ENCODE measurements at regions of chr18 and their contacts with region 1.

Region 1: GRCh38 chr18:22378672-22379282 is 38.9 kb downstream of the CTAGE1 start:
- DNase-seq: peak; percentile 14 to 27
- ATAC-seq: peak in 7 of 8 donors; percentile 64 to 87 (median 72)
- H3K4me3 ChIP-seq: no peak overlapping the region
- H3K27ac ChIP-seq: no peak overlapping the region
- H3K4me1 ChIP-seq: no peaks in the 10 kb centered on the region
- H3K27me3 ChIP-seq: no peaks in the 10 kb centered on the region
- CTCF ChIP-seq: peak; percentile 15 to 66 (median 56)

Region 2: GRCh38 chr18:21831413-21831831 is 547.4 kb before region 1 on chr18:
- intact Hi-C with region 1: no loop called
- DNase-seq: peak in 1 of 2 donors; percentile 74
- ATAC-seq: peak; percentile 69 to 88 (median 82)
- H3K4me3 ChIP-seq: peak overlapping the region; percentile 27 to 62 (median 47)
- H3K27ac ChIP-seq: peak overlapping the region; percentile 24 to 85 (median 78)
- H3K4me1 ChIP-seq: peaks cover 0 to 18% (median 0%) of the 10 kb centered on the region in 9 donors
- H3K27me3 ChIP-seq: no peaks in the 10 kb centered on the region
- CTCF ChIP-seq: no peak

Region 3: GRCh38 chr18:22165049-22165602 is 213.7 kb before region 1 on chr18:
- intact Hi-C with region 1: no loop called
- DNase-seq: peak in 1 of 2 donors; percentile 34
- ATAC-seq: no peak
- H3K4me3 ChIP-seq: peak overlapping the region in 9 of 10 donors; percentile 71 to 97 (median 93)
- H3K27ac ChIP-seq: peak overlapping the region; percentile 92 to 100 (median 98)
- H3K4me1 ChIP-seq: peaks cover 0 to 45% (median 32%) of the 10 kb centered on the region in 9 donors
- H3K27me3 ChIP-seq: peaks cover 0 to 89% (median 54%) of the 10 kb centered on the region in 7 donors
- CTCF ChIP-seq: no peak

Region 4: GRCh38 chr18:22332590-22332989 is 46.2 kb before region 1 on chr18:
- intact Hi-C with region 1: loop called in 1 of 10 experiments (anchors 5 kb)
- DNase-seq: no peak
- ATAC-seq: no peak
- H3K4me3 ChIP-seq: no peak overlapping the region
- H3K27ac ChIP-seq: no peak overlapping the region
- H3K4me1 ChIP-seq: peaks cover 2 to 27% (median 17%) of the 10 kb centered on the region in 9 donors
- H3K27me3 ChIP-seq: no peaks in the 10 kb centered on the region
- CTCF ChIP-seq: no peak